A549 (cell line): ENCODE measurements at regions of chr2 and their contacts with region 1.

Region 1: GRCh38 chr2:64359892-64360657 is 93.9 kb upstream of the LGALSL start:
- DNase-seq: peak; percentile 82
- ATAC-seq: peak; percentile 96 to 98
- H3K4me3 ChIP-seq: no peak overlapping the region
- H3K27ac ChIP-seq: peak overlapping the region; percentile 37 to 75; a peak in 5 of 6 replicates
- H3K4me1 ChIP-seq: peaks cover 18% of the 10 kb centered on the region
- CTCF ChIP-seq: peak; percentile 21; the same call in 1 of the 3 replicates
- EP300 ChIP-seq: no peak
- POLR2A ChIP-seq: no peak
- RAD21 ChIP-seq: peak in 1 of 2 experiments; percentile 15; a peak in 2 of 5 replicates

Region 2: GRCh38 chr2:64288321-64289193 is 71.5 kb before region 1 on chr2:
- CTCF ChIA-PET with region 1: no interaction called
- POLR2A ChIA-PET with region 1: no interaction called
- DNase-seq: no peak
- ATAC-seq: no peak
- H3K4me3 ChIP-seq: no peak overlapping the region
- H3K27ac ChIP-seq: no peak overlapping the region
- H3K4me1 ChIP-seq: peaks cover 10% of the 10 kb centered on the region; the same call in 2 of the 3 replicates
- CTCF ChIP-seq: no peak
- EP300 ChIP-seq: no peak
- POLR2A ChIP-seq: no peak
- RAD21 ChIP-seq: no peak

Region 3: DNA sequence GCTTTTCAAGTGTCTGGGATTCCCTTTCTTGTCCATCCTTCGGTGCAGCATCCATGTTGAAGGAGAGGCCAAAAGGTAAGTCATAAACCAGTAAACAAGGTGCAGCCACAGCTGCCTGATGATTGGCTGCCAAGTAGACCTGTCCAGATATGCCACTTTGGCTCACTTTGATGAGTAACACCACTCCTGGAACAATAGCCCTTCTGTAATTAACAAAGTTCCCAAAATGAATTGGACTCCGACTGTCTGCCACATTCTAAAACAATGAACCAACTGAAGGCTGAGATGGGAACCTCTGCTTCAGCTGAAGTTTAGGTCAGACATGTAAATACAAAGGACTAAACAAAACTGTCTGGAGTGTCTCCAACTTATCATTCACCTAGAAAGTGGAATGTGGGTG is 11.7 kb after region 1 on chr2:
- CTCF ChIA-PET with region 1: interaction called, 20 read pairs
- POLR2A ChIA-PET with region 1: interaction called, 3 read pairs
- DNase-seq: no peak
- ATAC-seq: no peak
- H3K4me3 ChIP-seq: no peak overlapping the region
- H3K27ac ChIP-seq: no peak overlapping the region
- H3K4me1 ChIP-seq: no peaks in the 10 kb centered on the region
- CTCF ChIP-seq: no peak
- EP300 ChIP-seq: no peak
- POLR2A ChIP-seq: no peak
- RAD21 ChIP-seq: no peak

Region 4: DNA sequence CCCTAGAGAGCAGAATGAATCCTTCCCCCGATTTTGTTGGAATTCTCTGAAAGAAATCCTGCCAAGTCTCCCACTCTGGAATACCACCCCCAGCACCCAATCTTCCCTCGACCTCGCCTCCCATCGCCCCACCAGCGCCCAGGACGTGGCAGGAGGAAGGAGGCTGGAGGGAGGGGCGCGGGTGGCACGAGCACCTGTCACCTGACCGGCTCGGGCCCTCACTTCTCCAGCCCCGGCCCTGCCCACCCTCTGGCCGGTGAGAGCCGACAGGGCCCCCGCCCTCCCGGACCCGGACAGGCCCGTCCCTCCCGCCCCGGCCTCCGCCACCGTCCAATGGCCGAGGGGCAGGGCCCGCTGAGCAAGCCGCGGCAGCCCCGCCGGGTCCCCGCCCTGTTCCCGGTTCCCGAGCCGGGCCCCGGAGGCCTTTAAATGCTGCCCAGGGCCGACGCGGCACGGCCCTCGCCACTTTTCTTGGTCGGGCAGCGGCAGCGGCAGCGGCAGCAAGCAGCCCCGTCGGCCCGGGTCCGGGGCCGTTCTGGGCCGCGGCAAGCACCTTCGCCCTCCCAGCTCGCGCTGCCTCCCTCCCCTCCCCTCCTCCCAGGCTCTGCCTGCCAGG is 93.8 kb after region 1 on chr2 and contains the start of gene LGALSL:
- CTCF ChIA-PET with region 1: no interaction called
- POLR2A ChIA-PET with region 1: interaction called, 10 read pairs
- DNase-seq: peak; percentile 76 to 78
- ATAC-seq: peak; percentile 88 to 92
- H3K4me3 ChIP-seq: peak within 1 kb of the TSS; percentile 85
- H3K27ac ChIP-seq: peak within 1 kb of the TSS; percentile 94 to 96
- H3K4me1 ChIP-seq: peaks cover 17% of the 10 kb centered on the region
- CTCF ChIP-seq: no peak
- EP300 ChIP-seq: no peak
- POLR2A ChIP-seq: no peak
- RAD21 ChIP-seq: no peak
- polyA plus RNA-seq, gene LGALSL: 12.7 and 14.1 TPM in 2 replicates